ENCODE measurements at regions of chr6 and their contacts with region 1.

Region 1: DNA sequence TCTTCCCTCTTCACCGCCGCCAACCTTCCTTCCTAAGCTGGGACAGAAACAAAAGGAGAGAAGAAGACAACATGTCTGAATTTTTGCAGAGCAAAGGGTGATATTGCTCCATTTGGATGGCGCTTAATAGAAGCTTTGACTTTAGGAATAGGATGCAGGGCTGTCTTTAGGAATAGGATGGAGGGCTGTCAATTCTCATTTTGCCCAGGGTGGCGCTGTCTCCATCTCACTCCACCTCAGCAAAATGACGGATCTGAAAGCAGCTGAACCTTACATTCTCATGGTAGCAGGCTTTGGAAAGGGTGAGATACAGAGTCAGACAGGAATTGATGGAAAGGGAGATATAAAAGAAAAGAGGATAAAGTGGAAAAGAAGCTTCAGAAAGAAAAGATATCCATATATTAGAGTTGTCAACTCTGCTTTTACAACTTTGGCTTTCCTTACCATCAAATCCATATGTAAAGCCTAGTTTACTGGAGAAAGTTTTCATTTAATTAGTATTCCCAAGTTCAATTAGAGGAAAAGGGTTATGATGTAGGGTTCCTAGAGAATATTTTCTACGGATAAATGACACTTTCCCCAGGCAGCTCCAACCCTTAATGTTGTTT is 2.4 kb downstream of the MTCL3 start:
- DNase-seq: no peak
- ATAC-seq: peak; percentile 87
- H3K4me3 ChIP-seq: peak overlapping the region; percentile 62
- H3K27ac ChIP-seq: no peak overlapping the region
- H3K4me1 ChIP-seq: peaks cover 4% of the 10 kb centered on the region
- H3K27me3 ChIP-seq: peaks cover 8 to 15% of the 10 kb centered on the region in 2 experiments
- CTCF ChIP-seq: peak; percentile 62 to 82 (median 80)
- EP300 ChIP-seq: no peak
- POLR2A ChIP-seq: no peak
- RAD21 ChIP-seq: 0 out of 2 replicates have a peak, but pooled peaks have one; percentile 6

Region 2: DNA sequence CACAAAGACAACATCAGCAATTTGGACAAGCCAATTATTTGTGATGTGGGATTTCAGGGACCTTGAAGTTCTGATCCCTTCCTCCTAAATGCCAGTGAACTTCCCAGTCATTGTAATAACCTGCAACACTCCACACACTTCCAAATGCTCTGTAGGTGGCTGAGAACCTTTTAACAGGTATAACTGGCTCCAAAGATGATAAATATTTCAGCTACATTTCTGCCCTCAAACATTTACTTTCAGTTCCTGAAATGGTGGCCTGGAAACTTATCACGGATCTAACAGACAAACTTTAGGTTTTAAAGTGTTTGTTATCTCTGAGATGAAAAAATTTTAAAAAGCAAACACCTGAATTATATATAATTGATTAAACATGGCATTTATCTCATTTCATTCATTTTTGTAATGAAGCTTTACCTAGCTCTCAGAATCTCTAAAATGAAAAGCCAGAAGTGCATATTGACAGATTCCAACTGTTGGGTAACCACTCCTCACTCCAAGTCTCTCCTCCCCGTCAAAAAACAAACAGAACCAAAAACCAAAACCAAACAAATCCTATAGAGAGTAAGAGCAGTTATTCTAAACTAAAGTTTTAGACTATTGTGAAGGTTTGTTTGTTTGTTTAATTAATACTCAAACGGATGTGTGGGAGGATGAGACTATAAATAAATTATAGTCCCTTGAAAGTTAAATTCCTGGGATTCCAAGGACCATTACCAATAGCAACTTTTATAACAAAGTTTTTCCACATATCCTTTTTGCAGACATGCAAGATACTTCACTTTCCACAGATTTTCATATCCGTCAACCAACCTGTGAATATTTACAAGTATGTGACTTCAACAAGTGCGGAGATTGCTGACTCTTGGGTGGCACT is 45.2 kb before region 1 on chr6:
- CTCF ChIA-PET with region 1: interaction called, 21 read pairs
- POLR2A ChIA-PET with region 1: interaction called, 3 read pairs
- RAD21 ChIA-PET with region 1: interaction called, 14 read pairs
- SMC1A ChIA-PET with region 1: interaction called, 21 read pairs
- in situ Hi-C with region 1: no loop called
- intact Hi-C with region 1: no loop called
- DNase-seq: no peak
- ATAC-seq: 0 out of 3 replicates have a peak, but pooled peaks have one; percentile 22
- H3K4me3 ChIP-seq: no peak overlapping the region
- H3K27ac ChIP-seq: no peak overlapping the region
- H3K4me1 ChIP-seq: no peaks in the 10 kb centered on the region
- H3K27me3 ChIP-seq: no peaks in the 10 kb centered on the region
- CTCF ChIP-seq: no peak
- EP300 ChIP-seq: no peak
- POLR2A ChIP-seq: no peak
- RAD21 ChIP-seq: no peak

Region 3: GRCh38 chr6:127496471-127496870 is 20.3 kb before region 1 on chr6:
- CTCF ChIA-PET with region 1: interaction called, 17 read pairs
- POLR2A ChIA-PET with region 1: interaction called, 5 read pairs
- RAD21 ChIA-PET with region 1: interaction called, 3 read pairs
- SMC1A ChIA-PET with region 1: interaction called, 7 read pairs
- in situ Hi-C with region 1: no loop called
- intact Hi-C with region 1: no loop called
- DNase-seq: no peak
- ATAC-seq: no peak
- H3K4me3 ChIP-seq: no peak overlapping the region
- H3K27ac ChIP-seq: no peak overlapping the region
- H3K4me1 ChIP-seq: no peaks in the 10 kb centered on the region
- H3K27me3 ChIP-seq: no peaks in the 10 kb centered on the region
- CTCF ChIP-seq: no peak
- EP300 ChIP-seq: no peak
- POLR2A ChIP-seq: no peak
- RAD21 ChIP-seq: no peak

Region 4: GRCh38 chr6:127533011-127533410 is 16.2 kb after region 1 on chr6:
- CTCF ChIA-PET with region 1: interaction called, 28 read pairs
- POLR2A ChIA-PET with region 1: no interaction called
- RAD21 ChIA-PET with region 1: no interaction called
- SMC1A ChIA-PET with region 1: interaction called, 8 read pairs
- in situ Hi-C with region 1: no loop called
- intact Hi-C with region 1: no loop called
- DNase-seq: no peak
- ATAC-seq: no peak
- H3K4me3 ChIP-seq: no peak overlapping the region
- H3K27ac ChIP-seq: no peak overlapping the region
- H3K4me1 ChIP-seq: no peaks in the 10 kb centered on the region
- H3K27me3 ChIP-seq: no peaks in the 10 kb centered on the region
- CTCF ChIP-seq: no peak
- EP300 ChIP-seq: no peak
- POLR2A ChIP-seq: no peak
- RAD21 ChIP-seq: no peak

Region 5: DNA sequence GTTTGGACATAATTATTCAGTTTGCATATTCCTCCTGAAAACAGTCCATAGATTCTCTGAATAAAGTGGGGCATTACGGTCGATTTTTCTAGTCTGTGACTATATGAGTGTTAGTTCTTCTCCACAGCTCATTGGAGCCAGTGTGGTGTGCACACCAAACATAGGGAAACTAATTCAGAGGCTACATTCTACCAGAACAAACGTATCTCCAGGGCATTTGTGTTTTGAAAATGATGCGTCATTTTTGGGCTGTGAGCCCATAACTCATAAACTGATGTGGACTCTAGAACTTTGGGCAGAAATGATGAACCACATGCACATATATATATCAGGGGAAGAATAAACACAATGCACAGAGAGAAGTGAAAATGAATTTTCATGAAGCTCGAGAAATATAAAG is 102.0 kb after region 1 on chr6:
- CTCF ChIA-PET with region 1: no interaction called
- POLR2A ChIA-PET with region 1: no interaction called
- RAD21 ChIA-PET with region 1: no interaction called
- SMC1A ChIA-PET with region 1: no interaction called
- in situ Hi-C with region 1: no loop called
- intact Hi-C with region 1: no loop called
- DNase-seq: no peak
- ATAC-seq: no peak
- H3K4me3 ChIP-seq: no peak overlapping the region
- H3K27ac ChIP-seq: no peak overlapping the region
- H3K4me1 ChIP-seq: no peaks in the 10 kb centered on the region
- H3K27me3 ChIP-seq: no peaks in the 10 kb centered on the region
- CTCF ChIP-seq: no peak
- EP300 ChIP-seq: no peak
- POLR2A ChIP-seq: no peak
- RAD21 ChIP-seq: no peak